Posterior vena cava (tissue), 2 donors: ENCODE measurements at regions of chr2 and their contacts with region 1.

Region 1: DNA sequence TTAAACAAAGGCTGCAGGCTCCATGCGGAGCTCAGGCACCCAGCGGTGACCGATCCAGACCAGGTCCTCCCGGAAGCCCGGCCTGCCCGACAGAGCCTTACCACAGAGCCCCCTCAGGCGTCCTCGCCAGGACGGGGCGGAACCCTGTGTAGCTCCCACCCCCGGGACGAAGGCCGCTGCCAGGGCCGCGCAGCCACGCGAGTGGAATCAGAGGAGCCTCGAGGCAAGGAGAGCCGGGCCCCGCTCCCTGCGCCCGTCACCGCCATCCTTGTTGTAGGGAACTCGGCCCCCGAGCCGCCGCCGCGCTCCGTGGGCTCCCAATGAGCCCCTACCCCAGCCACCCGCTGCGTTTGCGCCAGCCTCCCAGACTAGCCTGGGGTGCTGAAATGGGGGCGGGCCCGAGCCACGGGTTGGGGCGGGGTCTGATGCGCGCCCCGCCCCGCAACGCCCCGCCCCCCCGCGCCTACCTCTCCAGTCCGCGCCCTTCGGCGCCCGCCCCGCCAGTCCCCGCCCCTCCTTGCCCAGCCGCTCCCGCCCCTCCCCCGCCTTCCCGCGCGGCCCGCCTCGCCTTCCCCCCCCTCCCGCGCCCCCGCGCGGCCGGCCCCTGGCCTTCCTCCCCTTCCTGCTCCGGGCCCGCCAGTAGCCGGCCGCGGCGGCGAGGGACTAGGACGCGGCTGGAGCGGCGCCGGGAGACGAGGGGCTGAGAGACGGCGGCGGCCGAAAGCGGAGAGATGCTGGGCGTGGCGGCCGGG is at the start of gene LIMS1:
- DNase-seq: peak; percentile 97
- total RNA-seq, gene LIMS1: 58.6 to 68.9 TPM

Region 2: GRCh38 chr2:108154371-108155061 is 379.5 kb before region 1 on chr2:
- intact Hi-C with region 1: no loop called
- DNase-seq: no peak

Region 3: GRCh38 chr2:108583903-108584520 is 50.0 kb after region 1 on chr2:
- intact Hi-C with region 1: loop called in 1 of 2 experiments (anchors 10 kb)
- DNase-seq: no peak